Activated B cell treated with CpG ODN at 0.5 μM for 24 hours (primary cell): ENCODE measurements at regions of chr2 and their contacts with region 1.

Region 1: DNA sequence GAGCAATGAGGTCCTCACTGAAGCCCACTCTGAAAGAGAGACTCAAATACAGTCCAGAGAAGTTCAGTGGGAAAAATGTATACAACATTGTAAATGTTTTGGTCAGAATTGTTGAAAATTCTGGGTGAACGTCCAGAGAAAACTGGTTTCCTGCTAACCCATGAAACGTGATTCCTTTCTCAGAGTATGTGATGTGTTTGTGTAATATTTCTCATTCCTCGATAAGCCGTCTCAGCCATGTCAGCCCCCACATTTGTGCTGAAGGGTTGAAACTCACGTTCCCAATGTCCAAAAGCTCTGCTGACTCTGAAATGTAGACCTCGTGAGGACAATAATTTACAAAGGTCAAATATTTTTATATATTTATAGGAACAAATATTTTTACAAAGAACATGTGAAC is 51.6 kb downstream of the BMP10 start:
- DNase-seq: no peak
- ATAC-seq: no peak
- H3K4me3 Mint-ChIP-seq: no peak overlapping the region
- H3K27ac Mint-ChIP-seq: no peak overlapping the region
- H3K4me1 Mint-ChIP-seq: peaks cover 12% of the 10 kb centered on the region
- H3K27me3 Mint-ChIP-seq: no peaks in the 10 kb centered on the region
- CTCF ChIP-seq: no peak

Region 2: DNA sequence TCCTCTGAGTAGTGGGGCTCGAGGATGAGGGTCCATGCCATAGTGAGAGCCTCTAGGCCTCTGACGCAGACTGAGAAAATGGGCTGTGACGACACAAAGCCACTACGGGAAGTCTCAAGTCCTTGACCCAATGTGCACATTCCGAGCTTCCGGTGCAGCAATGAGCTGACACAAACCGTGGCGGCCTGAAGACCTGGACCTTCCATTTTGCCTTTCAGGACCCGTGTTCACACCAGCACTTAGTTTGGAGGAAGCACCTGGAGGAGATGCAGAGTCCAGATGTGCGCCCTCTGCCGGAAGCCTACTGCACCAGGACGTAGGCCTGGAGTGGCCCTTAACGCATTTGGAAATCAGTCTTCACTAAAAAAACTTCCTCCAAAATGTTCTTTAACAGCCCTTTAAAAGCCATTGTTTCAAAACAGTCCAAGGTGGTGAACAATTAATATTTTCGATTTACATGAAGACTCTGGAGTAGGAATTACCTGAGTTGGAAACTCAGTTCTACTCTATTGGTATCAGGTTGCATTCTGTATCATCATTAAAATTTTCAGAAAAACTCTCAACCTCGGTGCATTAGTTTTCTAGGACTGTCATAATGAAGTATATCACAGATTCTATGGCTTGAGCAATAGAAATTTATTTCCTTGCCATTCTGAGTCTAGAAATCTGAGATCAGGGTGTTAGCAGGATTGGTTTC is 17.8 kb after region 1 on chr2:
- CTCF ChIA-PET with region 1: interaction called, 3 read pairs
- POLR2A ChIA-PET with region 1: interaction called, 17 read pairs
- intact Hi-C with region 1: no loop called
- DNase-seq: peak; percentile 53
- ATAC-seq: peak; percentile 33
- H3K4me3 Mint-ChIP-seq: no peak overlapping the region
- H3K27ac Mint-ChIP-seq: peak overlapping the region; percentile 74
- H3K4me1 Mint-ChIP-seq: peaks cover 57% of the 10 kb centered on the region
- H3K27me3 Mint-ChIP-seq: no peaks in the 10 kb centered on the region
- CTCF ChIP-seq: no peak

Region 3: DNA sequence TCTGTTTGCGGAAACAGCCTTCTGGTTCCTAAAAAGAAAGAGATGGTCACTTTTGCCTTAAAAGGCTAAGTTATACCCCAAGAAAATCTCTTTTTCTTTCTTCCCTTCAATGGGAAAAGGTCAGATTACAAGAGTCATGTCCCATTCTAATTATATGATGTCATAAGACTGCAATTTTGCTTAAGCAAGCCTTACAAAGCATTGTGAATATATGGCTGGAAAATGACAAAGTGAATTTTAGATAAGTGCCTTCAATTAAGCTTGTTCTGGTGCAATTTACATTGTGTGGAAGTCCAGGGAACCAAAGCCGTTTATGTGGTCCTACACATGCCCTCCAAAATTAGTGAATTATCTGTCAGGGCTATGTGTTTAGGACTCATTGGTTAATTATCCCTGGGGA is 59.2 kb after region 1 on chr2:
- CTCF ChIA-PET with region 1: no interaction called
- POLR2A ChIA-PET with region 1: no interaction called
- intact Hi-C with region 1: no loop called
- DNase-seq: no peak
- ATAC-seq: no peak
- H3K4me3 Mint-ChIP-seq: no peak overlapping the region
- H3K27ac Mint-ChIP-seq: no peak overlapping the region
- H3K4me1 Mint-ChIP-seq: no peaks in the 10 kb centered on the region
- H3K27me3 Mint-ChIP-seq: peaks cover 17% of the 10 kb centered on the region
- CTCF ChIP-seq: no peak

Region 4: GRCh38 chr2:69054431-69054830 is 234.9 kb after region 1 on chr2:
- CTCF ChIA-PET with region 1: no interaction called
- POLR2A ChIA-PET with region 1: no interaction called
- intact Hi-C with region 1: no loop called
- DNase-seq: no peak
- ATAC-seq: no peak
- H3K4me3 Mint-ChIP-seq: no peak overlapping the region
- H3K27ac Mint-ChIP-seq: no peak overlapping the region
- H3K4me1 Mint-ChIP-seq: no peaks in the 10 kb centered on the region
- H3K27me3 Mint-ChIP-seq: peaks cover 14% of the 10 kb centered on the region
- CTCF ChIP-seq: no peak